ENCODE measurements at regions of chr4 and their contacts with region 1.

Region 1: GRCh38 chr4:118888666-118889311 is at the start of gene SYNPO2:
- DNase-seq: peak in 8 of 14 experiments; percentile 2 to 39 (median 16)
- ATAC-seq: no peak
- H3K4me3 ChIP-seq: peak within 1 kb of the TSS; percentile 35
- H3K4me3 Mint-ChIP-seq: peak within 1 kb of the TSS; percentile 42
- H3K27ac ChIP-seq: no peak within 1 kb of the TSS
- H3K27ac Mint-ChIP-seq: no peak within 1 kb of the TSS
- H3K4me1 ChIP-seq: peaks cover 10% of the 10 kb centered on the region
- H3K4me1 Mint-ChIP-seq: peaks cover 19% of the 10 kb centered on the region
- H3K27me3 ChIP-seq: peaks cover 13 to 27% of the 10 kb centered on the region in 2 experiments
- H3K27me3 Mint-ChIP-seq: peaks cover 43% of the 10 kb centered on the region
- CTCF ChIP-seq: no peak
- total RNA-seq, gene SYNPO2: 0.22 to 0.41 TPM

Region 2: DNA sequence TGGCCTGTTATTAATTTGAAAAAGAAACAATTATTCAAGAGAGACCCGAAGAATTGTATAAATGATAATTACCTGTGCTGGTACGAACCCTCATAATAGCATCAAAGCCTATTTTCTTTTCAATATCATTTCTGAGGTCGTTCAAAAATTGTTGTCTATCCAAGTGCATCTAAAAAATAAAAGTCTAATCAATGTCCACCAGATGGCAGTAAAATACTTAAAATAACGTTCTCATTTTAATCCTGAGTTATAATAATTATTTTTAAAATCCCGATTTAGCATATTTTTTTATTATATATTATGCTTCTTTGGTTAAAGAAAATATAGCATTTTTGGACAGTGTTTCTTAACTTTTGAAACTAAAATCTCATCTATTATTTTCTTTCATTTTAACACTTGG is 147.9 kb before region 1 on chr4:
- CTCF ChIA-PET with region 1: no interaction called
- POLR2A ChIA-PET with region 1: no interaction called
- intact Hi-C with region 1: loop called in 1 of 2 experiments (anchors 1 kb)
- DNase-seq: peak in 3 of 14 experiments; percentile 16 to 33 (median 17)
- ATAC-seq: no peak
- H3K4me3 ChIP-seq: no peak overlapping the region
- H3K4me3 Mint-ChIP-seq: no peak overlapping the region
- H3K27ac ChIP-seq: no peak overlapping the region
- H3K27ac Mint-ChIP-seq: no peak overlapping the region
- H3K4me1 ChIP-seq: no peaks in the 10 kb centered on the region
- H3K4me1 Mint-ChIP-seq: no peaks in the 10 kb centered on the region
- H3K27me3 ChIP-seq: no peaks in the 10 kb centered on the region
- H3K27me3 Mint-ChIP-seq: no peaks in the 10 kb centered on the region
- CTCF ChIP-seq: peak; percentile 67